ENCODE measurements at regions of chr7 and their contacts with region 1.

Region 1: GRCh38 chr7:116994611-116995010 is 41.3 kb downstream of the ST7 start:
- DNase-seq: no peak
- ATAC-seq: no peak
- H3K4me3 Mint-ChIP-seq: no peak overlapping the region
- H3K27ac Mint-ChIP-seq: no peak overlapping the region
- H3K4me1 Mint-ChIP-seq: no peaks in the 10 kb centered on the region
- H3K27me3 Mint-ChIP-seq: peaks cover 2% of the 10 kb centered on the region

Region 2: GRCh38 chr7:116357781-116358670 is 636.6 kb before region 1 on chr7:
- CTCF ChIA-PET with region 1: no interaction called
- POLR2A ChIA-PET with region 1: no interaction called
- DNase-seq: no peak
- ATAC-seq: no peak
- H3K4me3 Mint-ChIP-seq: no peak overlapping the region
- H3K27ac Mint-ChIP-seq: no peak overlapping the region
- H3K4me1 Mint-ChIP-seq: no peaks in the 10 kb centered on the region
- H3K27me3 Mint-ChIP-seq: peaks cover 7% of the 10 kb centered on the region

Region 3: DNA sequence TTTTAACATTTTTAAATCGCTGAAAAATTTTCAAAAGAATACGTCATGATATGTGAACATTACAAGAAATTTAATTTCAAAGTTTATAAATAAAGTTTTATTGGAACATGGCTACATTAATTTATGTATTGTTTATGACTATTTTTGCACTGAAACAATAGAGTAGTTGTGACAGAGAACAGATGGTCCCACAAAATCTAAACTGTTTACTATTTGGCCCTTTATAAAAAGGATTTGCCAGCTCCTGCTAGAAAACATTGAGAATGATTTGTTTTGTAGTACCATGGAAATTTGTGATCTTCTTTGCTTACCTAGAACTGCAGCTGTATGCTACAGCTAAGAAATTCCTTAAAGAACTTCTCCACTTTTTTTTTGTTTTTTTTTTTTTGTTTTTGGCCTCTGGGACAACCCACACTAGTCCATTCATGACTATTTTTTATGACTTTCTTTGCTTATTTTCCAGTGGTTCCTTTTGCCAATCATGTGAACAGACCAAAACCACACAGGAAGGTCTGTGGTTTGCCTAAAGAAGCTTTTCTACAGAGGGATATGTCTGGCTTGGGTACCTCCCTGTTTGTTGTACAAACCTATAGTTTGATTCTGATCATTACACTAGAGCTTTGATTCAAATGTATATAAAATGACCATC is 14.4 kb after region 1 on chr7:
- CTCF ChIA-PET with region 1: interaction called, 158 read pairs
- POLR2A ChIA-PET with region 1: no interaction called
- DNase-seq: peak; percentile 80
- ATAC-seq: peak; percentile 81
- H3K4me3 Mint-ChIP-seq: peak overlapping the region; percentile 48
- H3K27ac Mint-ChIP-seq: peak overlapping the region; percentile 78
- H3K4me1 Mint-ChIP-seq: peaks cover 58% of the 10 kb centered on the region
- H3K27me3 Mint-ChIP-seq: peaks cover 2% of the 10 kb centered on the region

Region 4: DNA sequence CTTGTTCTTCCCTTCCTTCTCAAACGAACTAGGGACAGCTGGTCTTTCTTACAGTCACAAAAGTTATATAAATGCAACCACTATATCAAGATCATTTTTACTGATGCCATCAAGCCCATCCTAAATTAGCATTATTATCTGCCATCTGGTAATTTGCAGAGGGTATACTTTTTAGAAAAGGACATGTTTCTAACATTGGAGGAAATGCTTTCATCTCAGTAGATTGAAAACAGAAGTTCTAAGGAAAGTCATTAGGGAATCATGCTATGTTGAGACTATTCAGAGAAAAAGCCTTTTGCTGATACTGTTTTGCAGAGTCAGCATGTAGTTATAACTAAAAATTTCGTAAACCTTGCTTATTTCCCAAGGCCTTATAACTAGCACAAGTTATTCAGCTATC is 181.6 kb after region 1 on chr7:
- CTCF ChIA-PET with region 1: no interaction called
- POLR2A ChIA-PET with region 1: no interaction called
- DNase-seq: no peak
- ATAC-seq: no peak
- H3K4me3 Mint-ChIP-seq: no peak overlapping the region
- H3K27ac Mint-ChIP-seq: no peak overlapping the region
- H3K4me1 Mint-ChIP-seq: no peaks in the 10 kb centered on the region
- H3K27me3 Mint-ChIP-seq: no peaks in the 10 kb centered on the region